ENCODE measurements at regions of chr6 and their contacts with region 1.

Region 1: DNA sequence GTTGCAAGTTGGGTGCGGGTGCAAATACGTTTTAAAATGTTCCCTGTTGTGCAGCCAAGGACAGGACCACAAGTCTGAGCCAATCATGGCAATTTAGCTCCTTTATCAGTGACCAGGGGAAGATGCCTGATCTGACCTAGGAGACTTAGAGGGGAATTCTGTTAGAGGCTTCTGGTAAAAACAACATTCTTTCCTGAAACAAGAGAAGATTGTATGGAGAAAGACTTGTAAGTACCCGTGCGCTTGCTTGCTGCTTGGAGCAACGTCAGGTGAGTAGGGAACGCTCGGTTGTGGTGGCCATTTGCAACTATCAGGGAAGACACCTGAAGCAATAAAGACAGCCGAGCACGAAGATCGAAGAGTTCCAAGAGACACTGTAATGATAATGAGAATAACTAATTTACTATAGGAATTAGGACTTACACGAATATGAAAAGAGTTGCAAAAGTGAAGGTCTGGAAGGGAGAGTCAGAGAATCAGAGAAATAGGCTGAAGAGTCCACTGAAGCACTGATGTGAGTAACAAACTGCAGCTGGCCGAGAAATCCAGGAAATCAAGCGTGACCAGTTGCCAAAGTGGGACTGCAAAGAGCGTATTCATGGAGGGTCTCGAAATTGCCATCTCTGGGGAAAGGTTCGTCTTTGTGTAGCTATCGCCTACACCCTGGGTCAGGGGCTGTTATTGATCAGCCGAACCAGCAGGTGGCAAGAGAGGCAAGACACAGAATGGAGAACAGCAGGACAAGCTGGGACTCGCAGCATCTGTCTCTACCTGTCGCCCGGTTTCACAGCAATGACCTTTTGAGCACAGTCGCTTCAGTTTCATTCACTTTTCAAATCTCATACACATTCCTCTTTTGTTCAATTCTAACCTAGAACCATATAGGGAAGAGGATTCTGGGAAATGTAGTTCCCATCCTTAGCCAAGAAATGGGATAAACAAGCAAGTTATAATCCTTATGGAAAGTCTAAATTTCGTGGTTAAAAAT is 26.1 kb downstream of the LOC128125822 start:
- DNase-seq: peak; percentile 71
- ATAC-seq: peak; percentile 97
- H3K4me3 Mint-ChIP-seq: peak overlapping the region; percentile 80
- H3K27ac Mint-ChIP-seq: peak overlapping the region; percentile 75
- H3K4me1 Mint-ChIP-seq: peaks cover 9% of the 10 kb centered on the region
- H3K27me3 Mint-ChIP-seq: no peaks in the 10 kb centered on the region; the same call in 1 of the 2 replicates
- CTCF ChIP-seq: peak; percentile 71

Region 2: DNA sequence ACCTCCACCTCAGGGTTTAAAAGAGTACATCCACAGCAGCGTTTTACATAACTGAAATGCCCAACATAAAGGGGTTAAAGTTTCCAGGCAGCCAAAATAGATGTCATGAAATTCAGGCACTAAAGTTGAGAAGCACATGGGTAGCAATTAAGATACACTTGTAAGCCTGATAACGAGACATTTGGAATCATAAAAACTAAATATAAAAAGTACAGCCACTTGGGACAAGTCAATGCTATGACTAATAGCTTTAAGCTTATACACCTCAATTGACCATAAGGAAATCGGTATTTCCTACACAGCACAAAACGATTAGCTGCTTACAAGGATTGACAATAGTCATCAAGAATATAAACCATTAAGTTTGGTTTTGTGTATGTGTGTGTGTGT is 14.2 kb before region 1 on chr6:
- CTCF ChIA-PET with region 1: interaction called, 10 read pairs
- POLR2A ChIA-PET with region 1: interaction called, 3 read pairs
- DNase-seq: no peak
- ATAC-seq: peak; percentile 22; the same call in 1 of the 2 replicates
- H3K4me3 Mint-ChIP-seq: no peak overlapping the region
- H3K27ac Mint-ChIP-seq: no peak overlapping the region
- H3K4me1 Mint-ChIP-seq: no peaks in the 10 kb centered on the region
- H3K27me3 Mint-ChIP-seq: no peaks in the 10 kb centered on the region
- CTCF ChIP-seq: no peak

Region 3: DNA sequence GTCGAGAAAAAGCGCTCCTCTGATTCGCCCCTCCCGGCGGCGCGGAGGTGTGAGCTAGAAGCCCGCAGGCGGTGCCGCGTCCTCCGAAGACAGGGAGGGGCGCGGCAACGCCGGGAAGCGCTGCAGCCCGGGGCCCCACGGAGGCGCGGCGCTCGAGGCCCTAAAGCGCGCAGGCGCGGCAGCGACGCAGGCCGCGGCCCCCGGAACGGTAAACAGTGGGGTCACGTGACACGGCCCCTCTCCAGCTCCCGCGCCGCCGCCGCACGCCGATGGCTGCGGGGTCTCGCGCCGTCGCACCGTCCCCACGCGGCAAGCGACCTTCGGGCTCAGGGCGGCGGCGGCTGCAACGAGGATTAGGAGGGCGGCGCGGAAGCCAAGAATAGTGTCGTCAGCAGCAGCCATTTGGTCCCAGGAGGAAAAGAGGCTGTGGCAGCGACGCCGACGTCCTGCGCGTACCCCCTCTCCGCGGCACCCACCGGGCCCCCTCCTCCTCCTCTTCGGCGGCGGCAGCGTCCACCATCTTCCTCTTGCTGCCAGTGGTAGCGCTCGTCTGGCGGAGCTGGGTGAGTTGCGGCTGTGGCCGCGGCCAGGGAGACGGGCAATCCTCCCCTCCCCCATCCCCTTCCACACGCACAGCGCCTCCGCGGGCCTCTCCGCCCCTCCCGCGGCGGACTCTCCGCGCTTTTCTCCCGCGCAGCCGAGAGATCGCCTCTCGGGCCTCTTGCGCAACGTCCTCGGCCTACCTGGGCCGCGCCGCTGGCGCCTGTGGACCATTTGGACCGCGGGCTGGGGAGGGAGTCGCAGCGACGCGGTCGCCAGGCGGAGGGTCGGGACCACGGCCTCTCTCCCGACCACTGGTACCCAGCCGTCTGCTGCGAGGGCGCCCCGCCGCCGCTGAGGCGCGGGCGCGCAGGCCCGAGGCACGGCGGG is 37.5 kb after region 1 on chr6 and contains the start of gene PHF3:
- CTCF ChIA-PET with region 1: interaction called, 15 read pairs
- POLR2A ChIA-PET with region 1: interaction called, 4 read pairs
- DNase-seq: peak; percentile 85
- ATAC-seq: peak; percentile 86
- H3K4me3 Mint-ChIP-seq: peak within 1 kb of the TSS; percentile 100
- H3K27ac Mint-ChIP-seq: peak within 1 kb of the TSS; percentile 100
- H3K4me1 Mint-ChIP-seq: peaks cover 42% of the 10 kb centered on the region
- H3K27me3 Mint-ChIP-seq: peaks cover 38% of the 10 kb centered on the region
- CTCF ChIP-seq: no peak
- total RNA-seq, gene PHF3: 50.2 to 56.4 TPM (median 52.6 TPM) in 3 replicates

Region 4: DNA sequence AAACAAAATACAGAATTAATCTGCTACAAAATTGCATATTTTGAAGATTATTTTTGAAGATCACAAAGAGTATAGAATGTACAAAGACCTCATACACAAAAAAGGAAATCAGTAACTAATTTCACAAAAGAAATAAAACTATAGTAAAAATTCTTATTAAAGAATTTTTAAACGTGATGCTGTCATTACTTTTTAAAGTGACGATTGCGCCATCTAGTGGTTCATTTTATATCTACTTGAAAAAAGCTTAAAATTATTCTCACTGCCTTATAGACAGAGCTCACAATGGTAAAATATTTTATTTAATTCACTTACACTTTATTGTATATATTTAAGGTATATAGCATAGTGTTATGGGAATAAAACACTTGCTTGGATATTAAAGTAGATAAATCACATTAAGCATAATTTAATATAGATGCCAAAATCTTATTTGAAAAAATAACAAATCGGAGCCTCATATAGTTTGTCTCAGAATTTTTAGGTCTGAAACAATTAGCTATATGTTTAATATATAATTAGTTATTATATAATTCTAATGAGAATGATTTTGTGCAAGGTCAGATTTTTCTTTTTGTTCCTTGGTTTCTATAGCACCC is 166.1 kb after region 1 on chr6:
- CTCF ChIA-PET with region 1: interaction called, 25 read pairs
- POLR2A ChIA-PET with region 1: no interaction called
- DNase-seq: no peak
- ATAC-seq: no peak
- H3K4me3 Mint-ChIP-seq: no peak overlapping the region
- H3K27ac Mint-ChIP-seq: no peak overlapping the region
- H3K4me1 Mint-ChIP-seq: peaks cover 3% of the 10 kb centered on the region
- H3K27me3 Mint-ChIP-seq: peaks cover 9% of the 10 kb centered on the region; the same call in 1 of the 2 replicates
- CTCF ChIP-seq: peak; percentile 43